ENCODE measurements at regions of chrX and their contacts with region 1.

Region 1: DNA sequence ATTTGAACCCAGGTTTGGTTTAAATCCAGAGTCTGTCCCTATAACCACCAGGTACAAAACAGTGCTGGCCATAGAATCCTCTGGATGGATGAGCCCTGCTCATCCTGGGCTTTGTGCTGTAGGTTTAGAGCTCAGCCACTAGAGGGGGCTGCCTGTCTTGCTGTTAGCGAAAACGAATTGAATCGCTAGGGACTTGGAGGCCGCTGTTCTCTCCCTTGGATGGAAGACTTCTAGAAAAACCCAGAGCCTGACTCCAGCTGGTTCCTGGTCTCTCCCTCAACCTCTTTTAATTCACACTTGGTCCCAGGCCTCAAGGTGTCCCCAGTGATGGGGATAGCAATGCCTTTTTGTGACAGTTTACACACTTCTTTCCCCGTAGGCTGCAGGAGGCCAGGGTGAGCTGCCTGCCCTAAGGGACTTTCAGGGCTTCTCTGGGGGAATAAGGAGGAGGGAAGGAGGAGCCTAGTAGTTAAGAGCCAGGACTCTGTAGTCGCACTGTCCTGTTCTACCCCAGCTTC is 8.7 kb downstream of the RIPPLY1 start:
- DNase-seq: peak; percentile 56 to 68
- H3K4me3 ChIP-seq: no peak overlapping the region
- H3K27ac ChIP-seq: peak overlapping the region; percentile 62
- H3K4me1 ChIP-seq: peaks cover 35% of the 10 kb centered on the region
- H3K27me3 ChIP-seq: no peaks in the 10 kb centered on the region
- CTCF ChIP-seq: peak; percentile 86

Region 2: DNA sequence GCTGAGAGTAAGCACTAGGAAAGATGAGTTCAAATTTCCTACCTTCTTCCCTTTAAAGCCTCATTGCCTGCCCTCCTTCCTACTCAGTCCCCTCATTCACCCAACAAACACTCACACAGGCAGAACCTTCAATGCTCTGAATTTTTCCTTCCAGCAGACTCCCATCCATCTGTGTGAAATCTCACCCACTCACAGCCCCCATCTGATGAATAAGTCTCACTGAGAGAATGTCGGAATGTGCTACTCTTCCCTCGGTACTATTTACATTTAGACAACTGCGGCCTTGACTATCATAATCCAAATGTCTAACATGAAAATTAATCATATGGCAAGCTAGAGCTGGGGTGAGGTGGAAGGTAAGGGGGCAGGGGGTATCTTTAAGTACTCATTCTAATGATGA is 45.1 kb after region 1 on chrX:
- CTCF ChIA-PET with region 1: no interaction called
- POLR2A ChIA-PET with region 1: no interaction called
- intact Hi-C with region 1: no loop called
- DNase-seq: no peak
- H3K4me3 ChIP-seq: no peak overlapping the region
- H3K27ac ChIP-seq: no peak overlapping the region
- H3K4me1 ChIP-seq: no peaks in the 10 kb centered on the region
- H3K27me3 ChIP-seq: no peaks in the 10 kb centered on the region
- CTCF ChIP-seq: no peak

Region 3: GRCh38 chrX:106955004-106955772 is 60.7 kb after region 1 on chrX:
- CTCF ChIA-PET with region 1: interaction called, 9 read pairs
- POLR2A ChIA-PET with region 1: no interaction called
- intact Hi-C with region 1: loop called (anchors 2 kb)
- DNase-seq: peak in 1 of 2 experiments; percentile 70
- H3K4me3 ChIP-seq: no peak overlapping the region
- H3K27ac ChIP-seq: peak overlapping the region; percentile 41
- H3K4me1 ChIP-seq: peaks cover 18% of the 10 kb centered on the region
- H3K27me3 ChIP-seq: no peaks in the 10 kb centered on the region
- CTCF ChIP-seq: no peak

Region 4: DNA sequence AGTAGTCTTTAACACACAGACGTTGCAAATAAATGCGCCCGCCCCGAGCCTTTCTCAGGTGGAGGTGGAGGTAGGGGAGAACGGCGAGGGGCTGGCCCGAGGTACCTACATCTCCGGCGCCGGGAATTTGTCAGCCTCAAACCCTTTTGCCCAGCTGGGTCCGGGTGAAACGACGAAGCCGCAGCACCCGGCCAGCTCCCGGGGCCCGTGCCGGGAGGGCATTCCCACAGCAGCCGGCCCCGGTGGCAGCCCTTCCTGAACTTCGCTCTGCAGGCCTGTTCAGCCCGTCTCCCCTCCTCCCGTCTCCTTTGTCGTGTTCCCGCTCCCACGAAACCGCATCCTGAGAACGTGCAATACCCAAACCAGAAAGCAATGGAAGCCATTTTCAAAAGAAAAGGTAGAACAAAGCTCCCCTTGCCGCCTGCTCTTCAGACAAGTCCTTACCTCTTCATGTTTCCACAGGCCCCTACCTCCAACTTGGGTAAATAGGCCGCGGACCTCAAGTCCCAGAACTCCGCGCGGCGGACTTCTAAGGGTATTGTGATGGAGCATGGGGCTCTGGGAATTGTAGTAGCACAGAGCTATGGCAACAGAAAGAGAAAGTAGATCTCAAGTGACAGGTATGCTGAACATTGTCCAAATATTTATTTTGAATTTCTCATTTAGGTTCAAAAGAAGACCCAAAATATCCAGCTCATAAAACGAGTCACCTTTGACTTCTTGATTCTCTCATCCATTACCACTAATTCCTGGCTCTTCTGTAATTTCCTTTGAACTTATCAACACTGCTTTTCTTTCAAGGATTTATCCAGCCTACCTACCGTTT is 224.1 kb after region 1 on chrX and contains the start of gene RBM41:
- CTCF ChIA-PET with region 1: interaction called, 6 read pairs
- POLR2A ChIA-PET with region 1: no interaction called
- intact Hi-C with region 1: loop called (anchors 10 kb)
- DNase-seq: peak; percentile 72 to 81
- H3K4me3 ChIP-seq: peak within 1 kb of the TSS; percentile 84
- H3K27ac ChIP-seq: no peak within 1 kb of the TSS
- H3K4me1 ChIP-seq: peaks cover 18% of the 10 kb centered on the region
- H3K27me3 ChIP-seq: no peaks in the 10 kb centered on the region
- CTCF ChIP-seq: no peak
- total RNA-seq, gene RBM41: 31.2 and 31.5 TPM in 2 replicates

Region 5: DNA sequence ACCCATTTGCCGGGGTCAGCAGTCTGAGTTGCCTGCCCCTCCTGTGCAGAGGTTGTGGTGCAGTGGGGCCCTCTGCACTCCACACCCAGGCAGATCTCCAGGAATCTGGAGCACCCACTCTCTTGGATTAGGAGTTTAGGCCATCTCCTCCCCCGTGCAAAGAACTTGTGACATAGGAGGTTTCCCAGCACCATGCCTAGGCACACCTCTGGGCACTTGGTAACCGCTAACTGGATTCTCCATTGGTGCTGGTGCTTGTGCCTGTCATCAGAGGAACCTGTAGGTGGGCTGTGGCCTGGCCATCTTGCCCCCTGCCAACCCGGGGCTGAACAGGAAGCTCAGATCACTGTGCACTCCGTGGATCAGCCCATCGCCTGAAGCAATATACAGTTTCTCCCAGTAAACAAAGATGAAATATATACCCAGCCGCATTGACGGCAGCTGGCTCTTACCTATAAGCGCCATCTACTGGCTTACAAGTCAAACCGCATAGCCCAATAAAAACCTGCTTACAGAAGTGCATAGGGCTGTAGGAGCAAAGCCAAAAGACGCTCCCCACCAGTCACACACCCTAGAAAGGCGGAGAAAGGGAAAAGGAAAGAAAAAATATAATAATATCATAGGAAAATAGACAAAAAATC is 1106.8 kb after region 1 on chrX:
- CTCF ChIA-PET with region 1: no interaction called
- POLR2A ChIA-PET with region 1: no interaction called
- intact Hi-C with region 1: loop called (anchors 2 kb)
- DNase-seq: peak; percentile 46 to 75
- H3K4me3 ChIP-seq: no peak overlapping the region
- H3K27ac ChIP-seq: no peak overlapping the region
- H3K4me1 ChIP-seq: no peaks in the 10 kb centered on the region; the same call in 1 of the 2 replicates
- H3K27me3 ChIP-seq: no peaks in the 10 kb centered on the region
- CTCF ChIP-seq: peak; percentile 68

Measured in PC-9 (cell line).